ENCODE measurements at regions of chr7 and their contacts with region 1.

Region 1: DNA sequence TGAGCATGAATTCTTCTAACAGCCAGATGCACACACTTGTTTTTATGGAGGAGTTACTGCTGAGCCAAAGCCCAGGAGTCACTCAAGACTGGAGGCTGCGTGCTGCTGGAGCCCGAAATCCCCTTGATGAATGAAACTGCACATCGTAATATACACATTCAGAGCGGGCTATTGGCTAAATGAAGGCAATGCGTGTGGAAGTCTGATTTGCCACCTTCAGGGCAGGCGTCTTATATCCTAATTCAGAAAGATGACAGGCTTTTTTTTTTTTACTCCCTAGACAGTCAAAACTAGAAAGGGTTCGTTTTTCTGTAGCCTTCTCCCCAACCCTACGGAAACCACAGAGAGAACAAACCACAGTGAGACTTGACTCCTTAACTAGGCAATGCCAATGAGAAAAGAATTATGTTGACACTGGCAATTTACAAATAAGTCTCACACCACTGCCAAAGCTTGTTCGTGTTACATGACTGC is 227.2 kb upstream of the KLF14 start:
- DNase-seq: peak; percentile 37 to 88 (median 79)
- ATAC-seq: peak; percentile 87
- H3K4me3 ChIP-seq: peak overlapping the region; percentile 65
- H3K4me3 Mint-ChIP-seq: peak overlapping the region; percentile 87 to 98 (median 90)
- H3K27ac ChIP-seq: peak overlapping the region; percentile 80
- H3K27ac Mint-ChIP-seq: peak overlapping the region in 8 of 9 donors; percentile 94 to 100 (median 97)
- H3K4me1 ChIP-seq: peaks cover 50 to 60% of the 10 kb centered on the region in 2 donors
- H3K4me1 Mint-ChIP-seq: peaks cover 53 to 76% (median 69%) of the 10 kb centered on the region in 7 donors
- H3K27me3 ChIP-seq: no peaks in the 10 kb centered on the region
- H3K27me3 Mint-ChIP-seq: no peaks in the 10 kb centered on the region

Region 2: GRCh38 chr7:130941322-130942210 is 19.6 kb before region 1 on chr7:
- CTCF ChIA-PET with region 1: interaction called, 6 read pairs
- POLR2A ChIA-PET with region 1: interaction called, 9 read pairs
- intact Hi-C with region 1: loop called (anchors 1 kb)
- DNase-seq: peak in 1 of 9 donors; percentile 37
- ATAC-seq: peak; percentile 42
- H3K4me3 ChIP-seq: peak overlapping the region; percentile 41
- H3K4me3 Mint-ChIP-seq: peak overlapping the region; percentile 72 to 90 (median 84)
- H3K27ac ChIP-seq: peak overlapping the region; percentile 78
- H3K27ac Mint-ChIP-seq: peak overlapping the region in 8 of 9 donors; percentile 88 to 96 (median 94)
- H3K4me1 ChIP-seq: peaks cover 56 to 69% of the 10 kb centered on the region in 2 donors
- H3K4me1 Mint-ChIP-seq: peaks cover 68 to 97% (median 92%) of the 10 kb centered on the region in 7 donors
- H3K27me3 ChIP-seq: no peaks in the 10 kb centered on the region
- H3K27me3 Mint-ChIP-seq: no peaks in the 10 kb centered on the region

Region 3: GRCh38 chr7:130982160-130982638 is 21.0 kb after region 1 on chr7:
- CTCF ChIA-PET with region 1: interaction called, 13 read pairs
- POLR2A ChIA-PET with region 1: interaction called, 6 read pairs
- intact Hi-C with region 1: loop called (anchors 2 kb)
- DNase-seq: peak in 7 of 9 donors; percentile 33 to 62 (median 56)
- ATAC-seq: peak; percentile 88
- H3K4me3 ChIP-seq: peak overlapping the region; percentile 9
- H3K4me3 Mint-ChIP-seq: no peak overlapping the region
- H3K27ac ChIP-seq: peak overlapping the region; percentile 65
- H3K27ac Mint-ChIP-seq: no peak overlapping the region
- H3K4me1 ChIP-seq: peaks cover 45 to 61% of the 10 kb centered on the region in 2 donors
- H3K4me1 Mint-ChIP-seq: peaks cover 7 to 39% (median 11%) of the 10 kb centered on the region in 7 donors
- H3K27me3 ChIP-seq: no peaks in the 10 kb centered on the region
- H3K27me3 Mint-ChIP-seq: no peaks in the 10 kb centered on the region

Region 4: GRCh38 chr7:131040467-131040932 is 79.3 kb after region 1 on chr7:
- CTCF ChIA-PET with region 1: no interaction called
- POLR2A ChIA-PET with region 1: no interaction called
- intact Hi-C with region 1: loop called in 1 of 2 experiments (anchors 1 kb)
- DNase-seq: peak in 7 of 9 donors; percentile 31 to 63 (median 56)
- ATAC-seq: peak; percentile 71
- H3K4me3 ChIP-seq: no peak overlapping the region
- H3K4me3 Mint-ChIP-seq: peak overlapping the region; percentile 16 to 84 (median 60)
- H3K27ac ChIP-seq: no peak overlapping the region
- H3K27ac Mint-ChIP-seq: peak overlapping the region; percentile 29 to 82 (median 54)
- H3K4me1 ChIP-seq: peaks cover 14 to 27% of the 10 kb centered on the region in 2 donors
- H3K4me1 Mint-ChIP-seq: peaks cover 44 to 78% (median 68%) of the 10 kb centered on the region in 7 donors
- H3K27me3 ChIP-seq: no peaks in the 10 kb centered on the region
- H3K27me3 Mint-ChIP-seq: no peaks in the 10 kb centered on the region

Region 5: DNA sequence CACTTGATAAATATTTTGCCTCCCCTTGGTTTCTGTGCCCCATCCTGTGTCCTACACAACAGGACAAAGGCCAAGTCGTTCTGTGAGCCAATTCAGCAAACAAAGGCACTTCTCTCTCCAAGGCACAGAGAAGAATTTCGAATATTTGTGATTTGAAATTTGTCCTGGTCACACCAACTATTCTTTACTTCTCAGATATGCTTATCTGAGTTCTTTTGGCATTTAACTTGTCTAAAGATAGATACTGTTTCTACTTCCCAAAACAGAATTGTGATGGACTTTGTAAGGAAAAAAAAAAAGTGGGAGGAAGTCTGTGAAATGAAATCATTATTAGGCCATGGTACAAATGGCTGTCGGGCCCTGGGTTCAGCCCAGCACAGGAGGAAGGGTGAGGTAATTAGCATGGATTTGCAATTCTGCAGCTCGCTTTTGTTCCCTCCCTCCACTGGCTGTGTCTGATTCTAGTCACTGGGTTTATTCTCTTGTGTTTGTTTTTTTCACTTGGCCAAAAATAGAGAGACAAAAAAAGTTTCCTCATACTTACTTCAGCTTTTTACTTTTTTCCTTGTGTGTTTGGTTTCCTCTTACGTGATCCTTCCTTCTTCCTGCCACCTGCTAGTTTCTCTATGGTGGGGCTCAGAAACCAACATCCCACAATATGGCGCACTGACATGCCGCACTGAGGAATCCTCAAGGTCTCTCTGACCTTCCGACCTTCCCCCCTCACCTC is 258.3 kb after region 1 on chr7:
- CTCF ChIA-PET with region 1: no interaction called
- POLR2A ChIA-PET with region 1: no interaction called
- intact Hi-C with region 1: no loop called
- DNase-seq: no peak
- ATAC-seq: peak; percentile 70
- H3K4me3 ChIP-seq: no peak overlapping the region
- H3K4me3 Mint-ChIP-seq: no peak overlapping the region
- H3K27ac ChIP-seq: no peak overlapping the region
- H3K27ac Mint-ChIP-seq: no peak overlapping the region
- H3K4me1 ChIP-seq: no peaks in the 10 kb centered on the region
- H3K4me1 Mint-ChIP-seq: peaks cover 0 to 16% (median 11%) of the 10 kb centered on the region in 7 donors
- H3K27me3 ChIP-seq: no peaks in the 10 kb centered on the region
- H3K27me3 Mint-ChIP-seq: peaks cover 0 to 3% (median 0%) of the 10 kb centered on the region in 5 donors

Region 6: GRCh38 chr7:131231381-131232220 is 270.4 kb after region 1 on chr7:
- CTCF ChIA-PET with region 1: no interaction called
- POLR2A ChIA-PET with region 1: no interaction called
- intact Hi-C with region 1: loop called in 1 of 2 experiments (anchors 1 kb)
- DNase-seq: peak; percentile 30 to 83 (median 74)
- ATAC-seq: peak; percentile 85
- H3K4me3 ChIP-seq: peak overlapping the region; percentile 33
- H3K4me3 Mint-ChIP-seq: peak overlapping the region; percentile 63 to 88 (median 82)
- H3K27ac ChIP-seq: peak overlapping the region; percentile 59
- H3K27ac Mint-ChIP-seq: peak overlapping the region; percentile 66 to 94 (median 91)
- H3K4me1 ChIP-seq: peaks cover 24 to 28% of the 10 kb centered on the region in 2 donors
- H3K4me1 Mint-ChIP-seq: peaks cover 21 to 67% (median 45%) of the 10 kb centered on the region in 7 donors
- H3K27me3 ChIP-seq: no peaks in the 10 kb centered on the region
- H3K27me3 Mint-ChIP-seq: no peaks in the 10 kb centered on the region

Region 7: GRCh38 chr7:131625817-131626372 is 664.7 kb after region 1 on chr7:
- CTCF ChIA-PET with region 1: no interaction called
- POLR2A ChIA-PET with region 1: no interaction called
- intact Hi-C with region 1: no loop called
- DNase-seq: no peak
- ATAC-seq: no peak
- H3K4me3 ChIP-seq: no peak overlapping the region
- H3K4me3 Mint-ChIP-seq: no peak overlapping the region
- H3K27ac ChIP-seq: no peak overlapping the region
- H3K27ac Mint-ChIP-seq: no peak overlapping the region
- H3K4me1 ChIP-seq: no peaks in the 10 kb centered on the region
- H3K4me1 Mint-ChIP-seq: no peaks in the 10 kb centered on the region
- H3K27me3 ChIP-seq: no peaks in the 10 kb centered on the region
- H3K27me3 Mint-ChIP-seq: peaks cover 0 to 21% (median 8%) of the 10 kb centered on the region in 5 donors